Mucosa of descending colon (tissue), 3 donors: ENCODE measurements at regions of chr3 and their contacts with region 1.

Region 1: GRCh38 chr3:154758109-154758868 is 321.8 kb upstream of the MME start:
- DNase-seq: no peak
- ATAC-seq: no peak
- H3K4me3 ChIP-seq: no peak overlapping the region
- H3K4me1 ChIP-seq: no peaks in the 10 kb centered on the region
- CTCF ChIP-seq: peak; percentile 16

Region 2: GRCh38 chr3:155323063-155323666 is 564.9 kb after region 1 on chr3:
- intact Hi-C with region 1: loop called (anchors 5 to 10 kb)
- DNase-seq: peak in 1 of 3 donors; percentile 62
- ATAC-seq: peak; percentile 56
- H3K4me3 ChIP-seq: no peak overlapping the region
- H3K4me1 ChIP-seq: no peaks in the 10 kb centered on the region
- CTCF ChIP-seq: peak; percentile 21